ENCODE measurements at regions of chr2 and their contacts with region 1.

Region 1: DNA sequence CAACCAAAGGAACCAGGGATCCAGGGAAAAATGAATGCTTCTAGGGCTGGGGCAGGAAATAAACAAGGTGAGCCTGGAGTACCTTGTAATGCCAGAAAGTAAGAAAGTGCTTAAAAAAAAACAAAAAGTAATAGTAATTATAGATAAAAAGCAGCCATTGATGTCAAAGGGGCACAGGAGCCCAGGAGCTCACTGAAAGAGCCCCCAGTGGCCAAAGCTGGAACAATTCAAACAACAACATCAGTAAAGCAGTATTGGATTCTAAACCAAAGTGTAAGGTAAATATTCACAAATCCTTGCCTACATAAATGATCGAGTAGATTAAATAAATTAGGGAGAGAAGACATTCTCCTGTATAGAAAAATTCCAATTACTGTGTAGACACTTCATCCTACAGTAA is 114.3 kb upstream of the ARL4C start:
- DNase-seq: no peak
- H3K4me3 ChIP-seq: no peak overlapping the region
- H3K27ac ChIP-seq: no peak overlapping the region
- H3K4me1 ChIP-seq: no peaks in the 10 kb centered on the region
- H3K27me3 ChIP-seq: peaks cover 23 to 35% of the 10 kb centered on the region in 2 experiments
- CTCF ChIP-seq: peak; percentile 33 to 39
- POLR2A ChIP-seq: no peak

Region 2: DNA sequence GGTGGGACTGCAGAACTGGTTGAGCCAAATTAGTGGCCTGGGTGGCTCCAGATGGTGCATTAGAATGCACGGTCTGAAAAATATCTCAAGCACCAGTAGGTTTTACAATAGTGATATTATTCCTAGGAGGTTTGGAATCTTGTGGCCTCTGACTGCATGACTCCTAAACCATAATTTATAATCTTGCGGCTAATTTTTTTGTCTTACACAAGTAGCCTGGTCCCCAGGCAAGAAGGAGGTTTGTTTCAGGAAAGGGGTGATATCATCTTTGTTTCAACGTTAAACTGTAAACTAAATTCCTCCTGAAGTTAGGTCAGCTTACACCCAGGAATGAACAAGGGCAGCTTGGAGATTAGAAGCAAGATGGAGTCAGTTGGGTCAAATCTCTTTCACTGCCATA is 15.4 kb before region 1 on chr2:
- CTCF ChIA-PET with region 1: interaction called, 16 read pairs
- POLR2A ChIA-PET with region 1: no interaction called
- dilution Hi-C with region 1: no loop called
- intact Hi-C with region 1: no loop called
- DNase-seq: no peak
- H3K4me3 ChIP-seq: no peak overlapping the region
- H3K27ac ChIP-seq: no peak overlapping the region
- H3K4me1 ChIP-seq: no peaks in the 10 kb centered on the region
- H3K27me3 ChIP-seq: peaks cover 0 to 8% of the 10 kb centered on the region in 2 experiments
- CTCF ChIP-seq: no peak
- POLR2A ChIP-seq: no peak